Right cardiac atrium (tissue), 5 donors: ENCODE measurements at regions of chr4 and their contacts with region 1.

Region 1: GRCh38 chr4:155787113-155787710 is 28.4 kb downstream of the GUCY1B1 start:
- DNase-seq: no peak
- ATAC-seq: peak; percentile 88 to 91
- H3K4me3 ChIP-seq: no peak overlapping the region
- H3K27ac ChIP-seq: no peak overlapping the region
- H3K4me1 ChIP-seq: no peaks in the 10 kb centered on the region
- H3K27me3 ChIP-seq: no peaks in the 10 kb centered on the region

Region 2: GRCh38 chr4:155383545-155383944 is 403.7 kb before region 1 on chr4:
- intact Hi-C with region 1: no loop called
- DNase-seq: no peak
- ATAC-seq: no peak
- H3K4me3 ChIP-seq: no peak overlapping the region
- H3K27ac ChIP-seq: no peak overlapping the region
- H3K4me1 ChIP-seq: no peaks in the 10 kb centered on the region
- H3K27me3 ChIP-seq: no peaks in the 10 kb centered on the region

Region 3: DNA sequence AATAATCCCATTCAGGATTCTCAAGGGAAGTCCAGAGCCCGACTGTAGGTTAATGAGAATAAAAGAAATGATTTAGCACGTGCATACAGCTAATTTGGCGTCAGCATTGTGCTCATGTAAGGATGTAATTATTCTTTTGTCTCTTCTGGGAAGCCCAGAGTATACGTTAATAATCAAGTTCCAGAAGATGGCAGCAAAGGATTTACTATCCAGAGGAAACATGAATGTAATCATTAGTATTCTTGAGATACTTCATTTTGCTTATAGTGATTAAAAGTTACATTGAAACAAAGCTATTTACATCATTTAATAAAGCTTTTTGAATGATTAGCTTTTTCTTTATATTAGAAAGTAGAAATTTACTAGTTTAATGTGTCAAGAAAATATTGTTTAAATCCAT is 383.3 kb before region 1 on chr4:
- intact Hi-C with region 1: loop called in 1 of 4 experiments (anchors 10 kb)
- DNase-seq: no peak
- ATAC-seq: peak; percentile 50 to 63
- H3K4me3 ChIP-seq: no peak overlapping the region
- H3K27ac ChIP-seq: no peak overlapping the region
- H3K4me1 ChIP-seq: no peaks in the 10 kb centered on the region
- H3K27me3 ChIP-seq: no peaks in the 10 kb centered on the region

Region 4: GRCh38 chr4:155442267-155443105 is 344.7 kb before region 1 on chr4:
- intact Hi-C with region 1: loop called (anchors 2 to 10 kb)
- DNase-seq: peak; percentile 81 to 93 (median 92)
- ATAC-seq: peak; percentile 91 to 94
- H3K4me3 ChIP-seq: peak overlapping the region; percentile 21
- H3K27ac ChIP-seq: no peak overlapping the region
- H3K4me1 ChIP-seq: no peaks in the 10 kb centered on the region
- H3K27me3 ChIP-seq: no peaks in the 10 kb centered on the region

Region 5: DNA sequence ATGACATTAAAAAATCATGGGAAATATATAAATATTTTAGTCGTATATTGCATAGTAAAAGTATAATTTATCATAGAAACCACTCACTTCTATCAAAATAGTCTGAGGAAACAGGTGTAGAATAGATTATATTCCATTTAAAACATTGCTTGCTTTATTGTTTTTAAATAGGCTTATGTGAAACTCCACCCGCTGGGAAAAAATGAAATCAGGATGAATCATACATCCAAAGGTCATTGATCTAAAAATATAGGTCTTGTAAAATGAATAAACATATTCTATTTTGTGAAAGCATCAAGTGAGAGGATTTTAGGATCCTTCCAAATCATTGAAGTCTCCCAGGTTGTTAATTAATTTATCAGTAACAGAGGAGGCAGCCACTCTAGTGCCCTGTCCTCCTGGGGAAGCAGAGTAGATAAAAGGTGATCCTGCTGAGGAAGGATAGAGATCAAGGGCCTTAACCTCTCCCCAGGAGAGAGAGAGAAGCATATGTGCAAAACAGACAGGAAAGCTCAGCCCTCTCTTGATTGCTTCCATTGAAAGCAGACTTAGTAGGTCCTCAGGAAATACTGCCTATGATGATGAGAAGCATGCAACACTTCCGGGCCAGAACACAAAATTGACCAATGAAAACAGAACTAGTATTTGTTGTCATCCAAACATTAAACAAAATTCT is 313.7 kb before region 1 on chr4:
- intact Hi-C with region 1: no loop called
- DNase-seq: no peak
- ATAC-seq: no peak
- H3K4me3 ChIP-seq: no peak overlapping the region
- H3K27ac ChIP-seq: no peak overlapping the region
- H3K4me1 ChIP-seq: no peaks in the 10 kb centered on the region
- H3K27me3 ChIP-seq: no peaks in the 10 kb centered on the region

Region 6: GRCh38 chr4:155675709-155676429 is 111.3 kb before region 1 on chr4:
- intact Hi-C with region 1: loop called in 1 of 4 experiments (anchors 10 kb)
- DNase-seq: no peak
- ATAC-seq: peak; percentile 61 to 63
- H3K4me3 ChIP-seq: no peak overlapping the region
- H3K27ac ChIP-seq: peak overlapping the region; percentile 29
- H3K4me1 ChIP-seq: no peaks in the 10 kb centered on the region
- H3K27me3 ChIP-seq: no peaks in the 10 kb centered on the region